Heart right ventricle (tissue), 16 donors: ENCODE measurements at regions of chr2 and their contacts with region 1.

Region 1: DNA sequence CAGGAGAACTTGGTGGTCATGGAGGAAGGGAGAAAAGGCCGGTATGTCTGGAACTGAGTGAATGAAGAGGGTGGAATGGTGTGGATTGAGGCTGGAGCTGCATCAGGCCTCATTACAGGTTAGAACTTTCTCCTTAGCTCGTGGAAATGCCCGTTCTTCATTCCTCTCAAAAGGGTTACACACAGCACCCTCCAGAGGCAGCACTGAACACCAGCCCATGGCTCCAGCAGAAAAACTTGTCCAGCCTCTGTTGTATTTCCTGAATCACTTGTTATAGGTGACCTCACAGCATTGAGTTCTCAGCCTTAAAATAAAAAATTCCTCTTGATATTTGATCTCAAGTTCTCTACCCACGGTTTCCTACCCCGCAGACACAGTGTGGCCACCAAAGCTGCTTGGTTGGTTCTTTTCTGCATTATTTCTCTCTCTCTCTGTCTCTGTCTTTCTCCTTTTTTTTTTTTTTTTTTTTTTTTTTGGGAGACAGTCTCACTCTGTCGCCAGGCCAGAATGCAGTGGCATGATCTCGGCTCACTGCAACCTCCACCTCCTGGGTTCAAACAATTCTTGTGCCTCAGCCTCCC is 89.6 kb downstream of the ITGB1BP1 start:
- DNase-seq: peak; percentile 28 to 73
- ATAC-seq: peak; percentile 74 to 85 (median 81)
- H3K4me3 ChIP-seq: no peak overlapping the region
- H3K27ac ChIP-seq: peak overlapping the region in 3 of 10 donors; percentile 1 to 39 (median 13)
- H3K4me1 ChIP-seq: peaks cover 0 to 59% (median 36%) of the 10 kb centered on the region in 9 donors
- H3K27me3 ChIP-seq: no peaks in the 10 kb centered on the region
- CTCF ChIP-seq: peak; percentile 44 to 87 (median 69)

Region 2: DNA sequence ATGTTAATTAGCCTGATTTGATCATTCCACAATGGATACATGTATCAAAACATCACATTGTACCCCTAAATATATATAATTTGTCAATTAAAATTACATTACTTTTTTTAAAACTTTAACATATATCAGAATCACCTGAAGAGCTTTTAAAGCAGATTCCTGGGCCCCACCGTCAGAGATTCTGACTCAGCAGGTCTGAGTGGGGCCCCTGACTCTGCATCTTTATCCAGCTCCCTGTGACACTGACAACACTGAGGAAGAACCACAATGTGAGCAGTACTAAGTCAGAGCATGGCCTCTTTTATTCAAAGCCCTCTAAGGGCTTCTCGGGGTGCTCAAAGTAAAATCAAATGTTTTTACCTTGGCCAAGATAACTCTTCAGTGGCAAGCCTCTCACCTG is 506.0 kb before region 1 on chr2:
- intact Hi-C with region 1: no loop called
- DNase-seq: no peak
- ATAC-seq: peak in 1 of 8 donors; percentile 12
- H3K4me3 ChIP-seq: no peak overlapping the region
- H3K27ac ChIP-seq: no peak overlapping the region
- H3K4me1 ChIP-seq: peaks cover 3 to 49% (median 31%) of the 10 kb centered on the region in 9 donors
- H3K27me3 ChIP-seq: no peaks in the 10 kb centered on the region
- CTCF ChIP-seq: no peak

Region 3: DNA sequence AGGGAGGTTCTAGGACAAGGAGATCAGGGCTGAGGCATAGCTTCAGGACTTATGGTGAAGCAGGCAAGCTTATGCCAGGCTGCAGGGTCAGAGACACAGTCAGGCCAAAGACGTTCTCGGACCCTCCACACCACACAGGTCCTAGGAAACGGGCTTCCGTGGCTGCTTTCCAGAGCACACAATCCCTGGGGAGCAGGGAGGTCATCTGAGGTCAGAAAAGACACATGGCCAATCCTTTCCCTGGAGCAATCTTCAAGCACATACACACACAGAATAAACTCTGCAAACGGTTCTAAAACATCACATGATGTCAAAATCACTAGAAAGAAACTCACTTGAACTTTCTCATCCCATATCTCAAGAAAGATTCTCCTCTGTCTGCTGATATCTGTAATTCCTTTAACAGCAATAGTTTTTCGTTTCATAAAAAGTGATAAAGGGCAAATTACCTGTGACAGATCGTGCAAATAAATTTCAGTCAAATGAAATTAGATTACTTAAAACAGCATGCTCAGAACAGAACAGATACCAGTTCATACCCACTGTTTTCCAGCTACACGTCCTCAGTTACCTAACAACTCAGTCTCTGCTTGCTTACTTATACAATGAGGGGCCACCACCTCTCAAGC is 394.1 kb before region 1 on chr2:
- intact Hi-C with region 1: loop called in 1 of 10 experiments (anchors 5 kb)
- DNase-seq: no peak
- ATAC-seq: no peak
- H3K4me3 ChIP-seq: no peak overlapping the region
- H3K27ac ChIP-seq: no peak overlapping the region
- H3K4me1 ChIP-seq: peaks cover 0 to 9% (median 0%) of the 10 kb centered on the region in 9 donors
- H3K27me3 ChIP-seq: no peaks in the 10 kb centered on the region
- CTCF ChIP-seq: no peak

Region 4: GRCh38 chr2:9644603-9645002 is 310.9 kb after region 1 on chr2:
- intact Hi-C with region 1: no loop called
- DNase-seq: no peak
- ATAC-seq: no peak
- H3K4me3 ChIP-seq: no peak overlapping the region
- H3K27ac ChIP-seq: no peak overlapping the region
- H3K4me1 ChIP-seq: peaks cover 0 to 10% (median 6%) of the 10 kb centered on the region in 9 donors
- H3K27me3 ChIP-seq: no peaks in the 10 kb centered on the region
- CTCF ChIP-seq: no peak